HepG2 (cell line): ENCODE measurements at regions of chr14 and their contacts with region 1.

Region 1: DNA sequence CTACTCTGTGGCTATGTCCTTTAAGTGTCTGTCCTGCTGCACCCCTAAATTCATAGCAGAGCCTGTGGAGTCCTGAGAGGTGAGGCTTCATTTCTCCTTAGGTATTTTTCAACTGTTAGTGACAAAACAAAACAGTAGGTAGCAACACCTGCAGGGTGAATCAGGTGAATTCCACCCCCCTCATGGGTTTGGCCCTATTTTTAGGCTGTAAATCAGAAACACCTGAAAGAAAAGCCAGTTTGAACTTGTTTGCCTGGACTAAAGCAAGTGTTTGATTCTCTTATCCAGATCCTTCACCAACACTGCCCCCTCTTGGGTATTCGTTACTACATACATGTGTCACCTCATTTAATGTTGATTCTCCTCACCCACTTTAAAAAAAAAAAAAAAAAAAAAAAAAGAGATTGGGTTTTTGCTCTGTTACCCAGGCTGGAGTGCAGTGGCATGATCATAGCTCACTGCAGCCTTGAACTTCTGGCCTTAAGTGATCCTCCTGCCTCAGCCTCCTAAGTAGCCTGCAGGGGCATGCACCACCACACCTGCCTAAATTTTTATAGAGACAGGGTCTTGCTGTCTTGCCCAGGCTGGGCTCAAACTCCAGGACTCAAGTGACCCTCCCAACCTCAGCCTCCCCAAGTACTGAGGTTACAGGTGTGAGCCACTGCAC is 10.3 kb downstream of the TBPL2 start:
- DNase-seq: peak; percentile 64
- ATAC-seq: peak; percentile 79
- H3K4me3 ChIP-seq: no peak overlapping the region
- H3K27ac ChIP-seq: no peak overlapping the region
- H3K4me1 ChIP-seq: peaks cover 18% of the 10 kb centered on the region
- H3K27me3 ChIP-seq: no peaks in the 10 kb centered on the region
- CTCF ChIP-seq: peak; percentile 55
- EP300 ChIP-seq: no peak
- POLR2A ChIP-seq: no peak
- RAD21 ChIP-seq: no peak

Region 2: GRCh38 chr14:55212634-55213033 is 217.5 kb before region 1 on chr14:
- CTCF ChIA-PET with region 1: interaction called, 8 read pairs
- POLR2A ChIA-PET with region 1: no interaction called
- in situ Hi-C with region 1: loop called (anchors 5 kb)
- intact Hi-C with region 1: loop called (anchors 2 kb)
- DNase-seq: no peak
- ATAC-seq: no peak
- H3K4me3 ChIP-seq: no peak overlapping the region
- H3K27ac ChIP-seq: no peak overlapping the region
- H3K4me1 ChIP-seq: peaks cover 4% of the 10 kb centered on the region
- H3K27me3 ChIP-seq: no peaks in the 10 kb centered on the region
- CTCF ChIP-seq: no peak
- EP300 ChIP-seq: no peak
- POLR2A ChIP-seq: no peak
- RAD21 ChIP-seq: no peak

Region 3: DNA sequence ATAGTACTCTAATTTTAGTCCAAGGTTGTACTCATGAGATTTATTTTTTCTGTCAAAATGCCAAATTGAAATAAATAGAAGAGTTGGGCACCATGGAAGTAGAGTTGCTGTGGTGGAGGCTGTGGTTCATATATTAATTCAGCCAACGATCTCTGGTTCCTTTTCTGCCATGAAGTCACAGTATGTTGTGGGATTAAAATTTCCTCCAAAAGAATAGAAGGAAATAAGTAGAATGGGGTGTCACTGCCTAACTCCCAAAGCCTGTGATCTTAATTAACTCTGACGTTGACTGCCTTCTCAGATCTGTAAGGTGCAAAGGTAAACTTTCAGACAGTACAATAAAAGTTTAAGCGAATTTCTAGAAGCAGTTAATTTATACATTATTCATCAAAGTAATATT is 196.6 kb before region 1 on chr14:
- CTCF ChIA-PET with region 1: no interaction called
- POLR2A ChIA-PET with region 1: no interaction called
- in situ Hi-C with region 1: no loop called
- intact Hi-C with region 1: no loop called
- DNase-seq: no peak
- ATAC-seq: no peak
- H3K4me3 ChIP-seq: no peak overlapping the region
- H3K27ac ChIP-seq: no peak overlapping the region
- H3K4me1 ChIP-seq: no peaks in the 10 kb centered on the region
- H3K27me3 ChIP-seq: peaks cover 0 to 11% of the 10 kb centered on the region in 2 experiments; a peak in 3 of 5 replicates
- CTCF ChIP-seq: no peak
- EP300 ChIP-seq: no peak
- POLR2A ChIP-seq: no peak
- RAD21 ChIP-seq: no peak

Region 4: DNA sequence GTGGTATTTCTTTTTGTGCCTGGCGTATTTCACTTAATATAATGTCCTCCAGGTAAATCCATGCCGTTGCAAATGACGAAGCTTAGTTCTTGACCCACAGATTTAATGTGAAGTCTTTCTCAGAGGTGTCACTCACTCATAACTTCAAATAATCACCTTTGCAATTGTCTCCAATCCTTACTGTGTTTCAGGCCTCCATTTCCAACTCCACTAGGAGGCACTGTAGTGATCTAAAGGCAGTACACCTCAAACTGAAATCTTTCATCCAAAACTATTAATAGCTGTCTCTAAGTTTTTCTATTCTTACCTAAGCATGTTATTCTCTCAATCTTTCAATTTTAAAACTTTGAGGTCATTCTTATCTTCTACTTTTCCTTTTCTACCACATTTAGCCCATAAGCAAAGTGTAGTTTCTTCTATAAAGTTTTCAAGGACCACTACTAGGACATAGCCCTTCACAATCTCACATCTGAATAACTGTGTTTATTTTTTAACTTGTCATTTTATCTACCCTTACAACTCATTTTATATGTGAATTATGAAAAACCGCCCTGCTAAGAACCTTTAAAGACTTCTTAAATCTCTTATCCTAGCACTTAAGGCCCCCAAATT is 184.4 kb before region 1 on chr14:
- CTCF ChIA-PET with region 1: interaction called, 7 read pairs
- POLR2A ChIA-PET with region 1: no interaction called
- in situ Hi-C with region 1: no loop called
- intact Hi-C with region 1: loop called (anchors 1 kb)
- DNase-seq: peak; percentile 25
- ATAC-seq: peak; percentile 62
- H3K4me3 ChIP-seq: no peak overlapping the region
- H3K27ac ChIP-seq: no peak overlapping the region
- H3K4me1 ChIP-seq: no peaks in the 10 kb centered on the region
- H3K27me3 ChIP-seq: peaks cover 2 to 43% of the 10 kb centered on the region in 2 experiments; a peak in 3 of 5 replicates
- CTCF ChIP-seq: peak; percentile 58
- EP300 ChIP-seq: no peak
- POLR2A ChIP-seq: no peak
- RAD21 ChIP-seq: no peak

Region 5: GRCh38 chr14:55270832-55271565 is 159.2 kb before region 1 on chr14 and contains the start of gene FBXO34:
- CTCF ChIA-PET with region 1: interaction called, 3 read pairs
- POLR2A ChIA-PET with region 1: no interaction called
- in situ Hi-C with region 1: no loop called
- intact Hi-C with region 1: loop called (anchors 10 kb)
- DNase-seq: peak; percentile 94
- ATAC-seq: peak; percentile 95
- H3K4me3 ChIP-seq: peak within 1 kb of the TSS; percentile 87 to 99 (median 97)
- H3K27ac ChIP-seq: peak within 1 kb of the TSS; percentile 78
- H3K4me1 ChIP-seq: peaks cover 40% of the 10 kb centered on the region
- H3K27me3 ChIP-seq: no peaks in the 10 kb centered on the region; a peak in 1 of 5 replicates
- CTCF ChIP-seq: peak; percentile 99
- EP300 ChIP-seq: no peak
- POLR2A ChIP-seq: peak; percentile 71 to 87
- RAD21 ChIP-seq: peak; percentile 90
- total RNA-seq, gene FBXO34: 13.5 and 15.5 TPM in 2 replicates

Region 6: DNA sequence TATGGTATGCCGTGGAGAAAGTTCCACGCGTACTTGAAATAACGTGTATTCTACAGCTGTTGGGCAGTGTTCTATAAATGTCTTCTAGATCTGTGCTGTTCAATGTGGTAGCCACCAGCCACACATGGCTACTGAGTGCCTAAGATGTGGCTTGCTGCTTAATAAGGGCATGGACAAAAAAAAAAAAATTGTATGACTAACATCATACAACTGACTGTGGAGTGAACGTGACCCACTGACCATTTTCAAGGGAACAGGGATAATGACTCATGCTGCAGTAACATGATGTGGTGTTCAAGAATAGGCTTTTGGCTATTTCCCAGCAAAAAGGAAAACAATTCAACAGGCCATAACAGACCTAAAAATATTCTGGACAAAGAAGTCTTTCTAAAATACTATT is 31.5 kb before region 1 on chr14:
- CTCF ChIA-PET with region 1: no interaction called
- POLR2A ChIA-PET with region 1: no interaction called
- in situ Hi-C with region 1: no loop called
- intact Hi-C with region 1: no loop called
- DNase-seq: no peak
- ATAC-seq: no peak
- H3K4me3 ChIP-seq: no peak overlapping the region
- H3K27ac ChIP-seq: no peak overlapping the region
- H3K4me1 ChIP-seq: no peaks in the 10 kb centered on the region
- H3K27me3 ChIP-seq: no peaks in the 10 kb centered on the region
- CTCF ChIP-seq: no peak
- EP300 ChIP-seq: no peak
- POLR2A ChIP-seq: no peak
- RAD21 ChIP-seq: no peak

Region 7: GRCh38 chr14:55654243-55654642 is 224.1 kb after region 1 on chr14:
- CTCF ChIA-PET with region 1: no interaction called
- POLR2A ChIA-PET with region 1: no interaction called
- in situ Hi-C with region 1: loop called (anchors 25 kb)
- intact Hi-C with region 1: loop called (anchors 10 kb)
- DNase-seq: no peak
- ATAC-seq: no peak
- H3K4me3 ChIP-seq: no peak overlapping the region
- H3K27ac ChIP-seq: no peak overlapping the region
- H3K4me1 ChIP-seq: no peaks in the 10 kb centered on the region
- H3K27me3 ChIP-seq: no peaks in the 10 kb centered on the region
- CTCF ChIP-seq: no peak
- EP300 ChIP-seq: no peak
- POLR2A ChIP-seq: no peak
- RAD21 ChIP-seq: no peak

Region 8: DNA sequence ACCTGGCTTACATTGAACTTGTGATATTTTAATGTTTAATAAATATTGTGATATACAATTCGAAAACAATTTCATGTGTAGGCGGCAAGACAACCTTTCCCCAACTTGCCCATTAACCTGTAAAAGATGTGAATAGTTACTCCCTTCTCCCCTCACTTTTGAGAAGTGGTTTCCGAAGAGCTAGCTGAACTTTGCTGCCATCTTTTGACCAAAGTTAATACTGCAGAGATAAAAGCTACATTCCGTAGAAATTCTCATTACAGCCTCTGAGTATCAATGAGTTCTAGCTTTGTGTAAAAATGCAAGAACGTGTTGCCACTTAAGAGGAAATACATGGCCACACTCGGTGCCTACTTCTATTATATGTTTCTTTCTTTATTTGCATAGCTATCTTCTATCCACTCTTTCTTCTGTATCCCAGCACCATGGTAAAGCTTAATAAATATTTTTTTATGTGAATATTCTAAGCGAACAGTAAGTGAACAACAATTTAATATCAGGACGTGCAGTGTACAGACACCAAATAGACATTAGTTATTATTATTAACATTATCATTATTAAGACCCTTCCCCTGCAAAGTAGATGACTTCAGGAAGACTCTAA is 1044.4 kb after region 1 on chr14:
- CTCF ChIA-PET with region 1: no interaction called
- POLR2A ChIA-PET with region 1: no interaction called
- in situ Hi-C with region 1: loop called (anchors 10 kb)
- intact Hi-C with region 1: no loop called
- DNase-seq: peak; percentile 16
- ATAC-seq: no peak; the same call in 2 of the 3 replicates
- H3K4me3 ChIP-seq: no peak overlapping the region
- H3K27ac ChIP-seq: no peak overlapping the region
- H3K4me1 ChIP-seq: no peaks in the 10 kb centered on the region
- H3K27me3 ChIP-seq: no peaks in the 10 kb centered on the region
- CTCF ChIP-seq: peak; percentile 78
- EP300 ChIP-seq: no peak
- POLR2A ChIP-seq: no peak
- RAD21 ChIP-seq: peak; percentile 36; the same call in 1 of the 2 replicates